CD8-positive, alpha-beta T cell (primary cell): ENCODE measurements at regions of chr16 and their contacts with region 1.

Region 1: DNA sequence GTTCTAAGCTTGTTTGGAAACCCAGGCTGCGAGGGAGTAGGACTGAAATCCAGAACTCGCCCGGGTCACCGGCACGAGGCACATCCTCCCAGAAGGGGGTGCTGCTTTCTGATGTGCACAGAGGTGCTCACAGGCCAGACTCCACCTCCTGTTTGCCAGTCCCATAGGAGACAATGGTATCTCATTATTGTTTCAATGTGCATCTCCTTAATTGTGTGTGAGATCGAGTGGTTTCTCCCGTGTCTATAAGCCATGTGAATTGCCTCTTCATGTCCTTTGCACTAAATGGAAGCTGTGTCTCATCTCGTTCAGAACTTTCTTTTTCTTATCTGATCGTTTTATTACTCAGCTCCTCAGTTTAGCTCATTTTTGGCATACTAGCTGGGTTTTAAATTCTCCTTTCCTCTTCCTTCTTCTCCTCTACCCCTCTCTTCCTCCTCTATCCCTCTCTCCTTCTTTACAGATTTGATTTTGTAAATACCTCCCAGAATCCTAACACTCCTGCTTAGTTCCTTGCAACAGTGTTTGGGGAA is 32.1 kb upstream of the PRKCB start:
- DNase-seq: peak; percentile 39 to 83 (median 75)
- ATAC-seq: peak; percentile 92
- H3K4me3 ChIP-seq: no peak overlapping the region
- H3K4me3 Mint-ChIP-seq: no peak overlapping the region
- H3K27ac ChIP-seq: no peak overlapping the region
- H3K27ac Mint-ChIP-seq: no peak overlapping the region
- H3K4me1 ChIP-seq: peaks cover 4% of the 10 kb centered on the region
- H3K4me1 Mint-ChIP-seq: peaks cover 11% of the 10 kb centered on the region
- H3K27me3 ChIP-seq: no peaks in the 10 kb centered on the region
- H3K27me3 Mint-ChIP-seq: no peaks in the 10 kb centered on the region
- CTCF ChIP-seq: peak; percentile 77

Region 2: GRCh38 chr16:23060458-23061320 is 743.0 kb before region 1 on chr16:
- CTCF ChIA-PET with region 1: no interaction called
- POLR2A ChIA-PET with region 1: no interaction called
- intact Hi-C with region 1: no loop called
- DNase-seq: peak; percentile 5 to 67 (median 54)
- ATAC-seq: peak; percentile 62
- H3K4me3 ChIP-seq: no peak overlapping the region
- H3K4me3 Mint-ChIP-seq: no peak overlapping the region
- H3K27ac ChIP-seq: no peak overlapping the region
- H3K27ac Mint-ChIP-seq: no peak overlapping the region
- H3K4me1 ChIP-seq: no peaks in the 10 kb centered on the region
- H3K4me1 Mint-ChIP-seq: no peaks in the 10 kb centered on the region
- H3K27me3 ChIP-seq: no peaks in the 10 kb centered on the region
- H3K27me3 Mint-ChIP-seq: peaks cover 12% of the 10 kb centered on the region
- CTCF ChIP-seq: peak; percentile 82

Region 3: GRCh38 chr16:23835390-23836077 is 31.9 kb after region 1 on chr16 and contains the start of gene PRKCB:
- CTCF ChIA-PET with region 1: interaction called, 35 read pairs
- POLR2A ChIA-PET with region 1: interaction called, 5 read pairs
- intact Hi-C with region 1: loop called (anchors 1 kb)
- DNase-seq: peak; percentile 80 to 94 (median 88)
- ATAC-seq: peak; percentile 88
- H3K4me3 ChIP-seq: peak within 1 kb of the TSS; percentile 71 to 93
- H3K4me3 Mint-ChIP-seq: peak within 1 kb of the TSS; percentile 99
- H3K27ac ChIP-seq: peak within 1 kb of the TSS; percentile 40 to 44
- H3K27ac Mint-ChIP-seq: peak within 1 kb of the TSS; percentile 95
- H3K4me1 ChIP-seq: peaks cover 48% of the 10 kb centered on the region
- H3K4me1 Mint-ChIP-seq: peaks cover 55% of the 10 kb centered on the region
- H3K27me3 ChIP-seq: no peaks in the 10 kb centered on the region
- H3K27me3 Mint-ChIP-seq: no peaks in the 10 kb centered on the region
- CTCF ChIP-seq: no peak
- total RNA-seq, gene PRKCB: 62.8 to 64.4 TPM

Region 4: GRCh38 chr16:23877107-23878090 is 73.7 kb after region 1 on chr16:
- CTCF ChIA-PET with region 1: interaction called, 75 read pairs
- POLR2A ChIA-PET with region 1: no interaction called
- intact Hi-C with region 1: loop called (anchors 5 kb)
- DNase-seq: peak in 3 of 9 experiments; percentile 27 to 48 (median 39)
- ATAC-seq: peak; percentile 65
- H3K4me3 ChIP-seq: no peak overlapping the region
- H3K4me3 Mint-ChIP-seq: no peak overlapping the region
- H3K27ac ChIP-seq: no peak overlapping the region
- H3K27ac Mint-ChIP-seq: peak overlapping the region; percentile 64
- H3K4me1 ChIP-seq: peaks cover 72% of the 10 kb centered on the region
- H3K4me1 Mint-ChIP-seq: peaks cover 81% of the 10 kb centered on the region
- H3K27me3 ChIP-seq: no peaks in the 10 kb centered on the region
- H3K27me3 Mint-ChIP-seq: no peaks in the 10 kb centered on the region
- CTCF ChIP-seq: peak; percentile 40

Region 5: DNA sequence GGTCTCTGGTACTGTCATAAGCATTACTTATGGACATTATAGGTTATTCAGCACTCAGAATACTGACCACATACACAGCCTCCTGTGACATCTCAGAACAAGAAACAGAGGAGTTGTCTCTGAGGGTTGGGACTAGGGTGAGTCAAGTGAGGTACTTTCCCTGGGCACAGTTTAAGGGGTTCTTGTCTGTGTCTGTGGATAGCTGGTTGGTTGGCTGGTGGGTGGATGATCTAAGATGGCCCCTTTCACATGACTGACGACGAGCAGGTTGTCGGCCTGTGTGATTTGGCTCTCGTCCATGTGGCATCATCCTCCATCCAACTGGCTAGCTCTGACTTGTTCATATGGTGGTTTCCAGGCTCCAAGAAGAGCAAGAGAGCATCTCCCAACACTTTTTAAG is 196.0 kb after region 1 on chr16:
- CTCF ChIA-PET with region 1: interaction called, 335 read pairs
- POLR2A ChIA-PET with region 1: no interaction called
- intact Hi-C with region 1: no loop called
- DNase-seq: peak in 1 of 9 experiments; percentile 25
- ATAC-seq: no peak
- H3K4me3 ChIP-seq: no peak overlapping the region
- H3K4me3 Mint-ChIP-seq: no peak overlapping the region
- H3K27ac ChIP-seq: no peak overlapping the region
- H3K27ac Mint-ChIP-seq: no peak overlapping the region
- H3K4me1 ChIP-seq: no peaks in the 10 kb centered on the region
- H3K4me1 Mint-ChIP-seq: peaks cover 25% of the 10 kb centered on the region
- H3K27me3 ChIP-seq: no peaks in the 10 kb centered on the region
- H3K27me3 Mint-ChIP-seq: no peaks in the 10 kb centered on the region
- CTCF ChIP-seq: no peak

Region 6: DNA sequence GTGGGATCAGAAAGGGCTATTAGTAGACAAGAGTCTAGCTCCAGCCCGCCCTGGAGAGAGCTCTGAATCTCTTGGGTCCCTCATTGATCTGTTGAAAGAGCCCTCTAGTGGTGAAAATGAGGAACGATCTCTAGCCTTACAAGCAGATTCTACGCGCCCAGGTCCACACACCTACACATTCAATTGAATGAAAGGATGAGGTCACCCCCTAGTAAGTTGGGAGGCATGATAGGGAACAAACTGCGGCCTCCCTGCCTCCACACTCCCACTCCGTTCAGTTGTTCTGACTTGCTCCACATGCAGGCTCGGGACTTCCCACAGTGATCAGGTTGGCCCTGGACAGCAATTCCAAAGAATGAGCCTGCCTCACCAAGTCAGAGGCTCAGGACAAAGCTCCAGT is 449.5 kb after region 1 on chr16:
- CTCF ChIA-PET with region 1: interaction called, 12 read pairs
- POLR2A ChIA-PET with region 1: no interaction called
- intact Hi-C with region 1: no loop called
- DNase-seq: peak in 8 of 9 experiments; percentile 3 to 69 (median 31)
- ATAC-seq: peak; percentile 56
- H3K4me3 ChIP-seq: no peak overlapping the region
- H3K4me3 Mint-ChIP-seq: no peak overlapping the region
- H3K27ac ChIP-seq: no peak overlapping the region
- H3K27ac Mint-ChIP-seq: no peak overlapping the region
- H3K4me1 ChIP-seq: no peaks in the 10 kb centered on the region
- H3K4me1 Mint-ChIP-seq: no peaks in the 10 kb centered on the region
- H3K27me3 ChIP-seq: peaks cover 15 to 20% of the 10 kb centered on the region in 2 experiments
- H3K27me3 Mint-ChIP-seq: peaks cover 43% of the 10 kb centered on the region
- CTCF ChIP-seq: peak; percentile 72